ENCODE measurements at regions of chrX and their contacts with region 1.

Region 1: DNA sequence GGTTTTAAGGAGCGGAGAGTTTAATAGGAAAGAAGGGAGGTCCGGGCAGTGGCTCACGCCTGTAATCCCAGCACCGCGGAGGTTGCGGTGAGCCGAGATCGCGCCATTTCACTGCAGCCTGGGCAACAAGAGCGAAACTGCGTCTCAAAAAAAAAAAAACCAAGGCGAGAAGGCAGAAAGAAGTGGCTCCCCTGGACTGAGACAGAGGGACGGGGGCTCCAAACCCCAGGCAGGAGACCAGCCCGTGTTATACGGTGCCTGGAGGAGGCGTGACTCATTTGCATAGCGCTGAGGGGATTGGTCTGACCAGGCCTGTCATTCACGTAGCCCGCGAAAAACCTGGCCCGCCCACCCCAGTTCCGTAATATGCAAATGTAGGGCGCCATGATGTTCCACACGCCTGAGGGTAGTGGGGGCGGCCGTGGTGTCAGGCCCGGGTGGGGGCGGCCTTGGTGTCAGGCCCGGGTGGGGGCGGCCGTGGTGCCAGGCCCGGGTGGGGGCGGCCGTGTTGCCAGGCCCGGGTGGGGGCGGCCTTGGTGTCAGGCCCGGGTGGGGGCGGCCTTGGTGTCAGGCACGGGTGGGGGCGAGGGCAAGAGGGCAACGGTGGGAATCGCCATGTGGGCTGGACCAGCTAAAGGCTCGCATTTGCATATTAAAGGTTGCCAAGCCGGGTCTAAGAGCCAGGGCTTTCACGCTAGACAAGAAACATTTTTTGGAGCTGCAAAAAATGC is 2.1 kb downstream of the PLCXD1 start:
- DNase-seq: peak; percentile 76
- ATAC-seq: peak; percentile 100
- H3K4me3 ChIP-seq: peak overlapping the region; percentile 71
- H3K27ac ChIP-seq: no peak overlapping the region
- H3K4me1 ChIP-seq: no peaks in the 10 kb centered on the region
- H3K27me3 ChIP-seq: no peaks in the 10 kb centered on the region
- CTCF ChIP-seq: no peak

Region 2: GRCh38 chrX:318739-319578 is 35.7 kb after region 1 on chrX and contains the start of gene GTPBP6:
- CTCF ChIA-PET with region 1: no interaction called
- POLR2A ChIA-PET with region 1: no interaction called
- intact Hi-C with region 1: loop called (anchors 5 kb)
- DNase-seq: peak; percentile 97
- ATAC-seq: peak; percentile 77
- H3K4me3 ChIP-seq: peak within 1 kb of the TSS; percentile 79
- H3K27ac ChIP-seq: peak within 1 kb of the TSS; percentile 48; the same call in 1 of the 2 replicates
- H3K4me1 ChIP-seq: 0 out of 2 replicates have a peak, but pooled peaks cover 4% of the 10 kb centered on the region
- H3K27me3 ChIP-seq: no peaks in the 10 kb centered on the region
- CTCF ChIP-seq: no peak
- total RNA-seq, gene GTPBP6: 38.8 and 49.0 TPM in 2 replicates

Region 3: DNA sequence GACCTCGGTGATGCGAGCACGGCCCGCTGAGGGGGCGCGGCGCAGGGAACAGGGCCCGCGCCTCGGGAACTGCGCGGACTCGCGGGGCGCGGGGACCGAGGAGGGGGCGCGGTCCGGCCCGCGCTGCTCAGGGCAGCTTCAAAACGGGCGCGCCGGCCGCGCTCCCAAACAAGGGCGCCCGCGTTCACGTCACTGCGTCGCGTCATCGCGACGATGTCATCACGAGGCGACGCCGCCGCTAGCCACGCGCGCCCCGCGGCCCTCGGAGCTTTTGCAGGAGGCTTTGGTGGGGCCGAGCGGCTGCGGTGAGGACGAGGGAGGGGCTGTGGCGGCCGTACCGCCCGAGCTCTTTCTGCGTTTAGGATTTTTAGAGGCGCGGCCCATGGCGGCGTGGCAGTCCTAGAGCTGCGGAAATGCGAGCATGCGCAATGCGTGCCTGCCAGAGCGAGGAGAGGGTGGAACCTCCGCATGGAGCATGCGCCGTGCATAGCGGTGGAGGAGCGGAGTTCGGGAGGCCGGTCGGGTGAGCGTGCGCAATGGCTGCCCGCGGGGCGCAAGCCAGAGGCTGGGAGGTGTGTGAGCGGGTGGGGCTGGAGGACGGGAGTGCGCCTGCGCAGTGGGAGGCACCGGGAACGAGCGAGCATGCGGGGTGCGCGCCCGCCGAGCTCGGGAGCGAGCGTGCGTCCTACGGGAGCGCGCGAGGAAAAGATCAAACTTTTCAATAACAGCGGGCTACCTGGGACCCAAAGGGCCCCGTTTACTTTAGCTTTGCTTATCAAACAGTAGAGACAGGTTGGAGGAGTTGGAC is 103.7 kb after region 1 on chrX and contains the start of gene PPP2R3B:
- CTCF ChIA-PET with region 1: no interaction called
- POLR2A ChIA-PET with region 1: no interaction called
- intact Hi-C with region 1: no loop called
- DNase-seq: peak; percentile 95
- ATAC-seq: peak; percentile 94
- H3K4me3 ChIP-seq: peak within 1 kb of the TSS; percentile 91
- H3K27ac ChIP-seq: peak within 1 kb of the TSS; percentile 94
- H3K4me1 ChIP-seq: 0 out of 2 replicates have a peak, but pooled peaks cover 4% of the 10 kb centered on the region
- H3K27me3 ChIP-seq: no peaks in the 10 kb centered on the region
- CTCF ChIP-seq: no peak
- total RNA-seq, gene PPP2R3B: 35.2 and 35.4 TPM in 2 replicates

Region 4: DNA sequence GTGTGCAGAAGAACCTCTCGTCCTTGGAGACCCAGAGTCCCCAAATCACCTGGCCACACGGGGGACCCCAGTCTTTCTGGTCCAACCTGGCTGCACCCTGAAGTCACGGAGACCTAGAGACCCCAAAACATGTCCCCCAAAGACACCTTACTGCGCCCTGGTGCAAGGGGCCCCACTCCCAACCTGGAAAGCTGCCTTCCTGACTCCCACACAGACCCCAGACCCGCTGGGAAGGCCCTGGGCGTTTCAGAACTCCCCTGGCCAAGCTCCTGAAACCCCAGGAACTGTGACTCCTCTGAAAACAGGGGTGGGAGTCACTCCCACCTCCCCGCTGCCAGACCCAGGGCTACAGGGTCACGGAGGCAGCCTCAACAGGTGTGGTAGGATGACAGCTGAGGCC is 334.6 kb after region 1 on chrX:
- CTCF ChIA-PET with region 1: no interaction called
- POLR2A ChIA-PET with region 1: no interaction called
- intact Hi-C with region 1: no loop called
- DNase-seq: no peak
- ATAC-seq: no peak
- H3K4me3 ChIP-seq: no peak overlapping the region
- H3K27ac ChIP-seq: no peak overlapping the region
- H3K4me1 ChIP-seq: no peaks in the 10 kb centered on the region
- H3K27me3 ChIP-seq: no peaks in the 10 kb centered on the region; the same call in 1 of the 2 replicates
- CTCF ChIP-seq: no peak

Region 5: DNA sequence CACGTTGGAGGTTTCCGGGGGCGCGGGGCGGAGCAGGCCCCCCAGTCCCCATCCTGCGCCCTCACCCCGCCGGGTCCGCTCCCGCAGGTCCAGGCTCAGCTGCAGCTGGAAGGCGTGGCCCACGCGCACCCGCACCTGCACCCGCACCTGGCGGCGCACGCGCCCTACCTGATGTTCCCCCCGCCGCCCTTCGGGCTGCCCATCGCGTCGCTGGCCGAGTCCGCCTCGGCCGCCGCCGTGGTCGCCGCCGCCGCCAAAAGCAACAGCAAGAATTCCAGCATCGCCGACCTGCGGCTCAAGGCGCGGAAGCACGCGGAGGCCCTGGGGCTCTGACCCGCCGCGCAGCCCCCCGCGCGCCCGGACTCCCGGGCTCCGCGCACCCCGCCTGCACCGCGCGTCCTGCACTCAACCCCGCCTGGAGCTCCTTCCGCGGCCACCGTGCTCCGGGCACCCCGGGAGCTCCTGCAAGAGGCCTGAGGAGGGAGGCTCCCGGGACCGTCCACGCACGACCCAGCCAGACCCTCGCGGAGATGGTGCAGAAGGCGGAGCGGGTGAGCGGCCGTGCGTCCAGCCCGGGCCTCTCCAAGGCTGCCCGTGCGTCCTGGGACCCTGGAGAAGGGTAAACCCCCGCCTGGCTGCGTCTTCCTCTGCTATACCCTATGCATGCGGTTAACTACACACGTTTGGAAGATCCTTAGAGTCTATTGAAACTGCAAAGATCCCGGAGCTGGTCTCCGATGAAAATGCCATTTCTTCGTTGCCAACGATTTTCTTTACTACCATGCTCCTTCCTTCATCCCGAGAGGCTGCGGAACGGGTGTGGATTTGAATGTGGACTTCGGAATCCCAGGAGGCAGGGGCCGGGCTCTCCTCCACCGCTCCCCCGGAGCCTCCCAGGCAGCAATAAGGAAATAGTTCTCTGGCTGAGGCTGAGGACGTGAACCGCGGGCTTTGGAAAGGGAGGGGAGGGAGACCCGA is 361.3 kb after region 1 on chrX:
- CTCF ChIA-PET with region 1: no interaction called
- POLR2A ChIA-PET with region 1: no interaction called
- intact Hi-C with region 1: no loop called
- DNase-seq: no peak
- ATAC-seq: no peak
- H3K4me3 ChIP-seq: no peak overlapping the region
- H3K27ac ChIP-seq: no peak overlapping the region
- H3K4me1 ChIP-seq: no peaks in the 10 kb centered on the region
- H3K27me3 ChIP-seq: peaks cover 3% of the 10 kb centered on the region; the same call in 1 of the 2 replicates
- CTCF ChIP-seq: no peak